WTC11 (cell line): ENCODE measurements at regions of chr6 and their contacts with region 1.

Region 1: GRCh38 chr6:121479496-121480402 is 44.3 kb downstream of the GJA1 start:
- DNase-seq: no peak
- ATAC-seq: peak; percentile 58
- H3K4me3 Mint-ChIP-seq: no peak overlapping the region
- H3K27ac Mint-ChIP-seq: 0 out of 2 replicates have a peak overlapping the region, but pooled peaks have one; percentile 51
- H3K4me1 Mint-ChIP-seq: peaks cover 16% of the 10 kb centered on the region
- H3K27me3 Mint-ChIP-seq: no peaks in the 10 kb centered on the region
- CTCF ChIP-seq: no peak

Region 2: DNA sequence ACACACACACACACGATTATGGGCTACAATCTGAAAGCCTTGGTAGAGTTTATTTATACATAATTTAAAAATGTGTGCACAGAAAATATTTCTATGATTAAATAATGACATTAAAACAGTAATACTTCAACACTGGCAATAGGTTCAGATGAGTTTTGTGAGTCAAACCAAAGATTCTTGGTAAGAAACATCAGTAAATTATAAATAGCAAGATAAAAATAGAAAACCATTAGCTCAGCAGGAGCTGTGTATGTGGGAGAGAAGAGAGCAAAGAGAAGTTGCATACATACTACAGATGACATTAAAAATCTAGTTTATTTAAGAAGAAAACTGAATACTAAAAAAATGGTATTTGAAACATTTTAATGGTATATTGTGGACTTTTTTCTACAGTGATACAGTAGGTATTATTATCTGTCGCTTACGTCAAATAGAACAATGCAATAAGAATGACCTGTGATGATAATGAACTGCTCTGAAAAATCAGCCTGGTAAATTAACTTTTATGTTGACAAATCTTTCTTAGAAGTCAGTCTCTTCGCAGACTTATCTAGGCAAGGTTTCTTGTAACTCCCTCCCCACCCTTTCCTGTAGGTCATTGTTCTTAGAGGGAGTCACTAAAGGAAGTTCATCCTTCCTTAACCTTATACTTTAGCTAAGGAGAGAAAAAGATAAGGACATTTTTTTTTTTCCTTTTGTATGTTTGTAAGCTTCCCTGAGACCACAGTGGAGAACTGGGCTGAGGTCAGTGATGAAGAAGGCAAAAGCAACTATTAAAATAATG is 105.0 kb after region 1 on chr6:
- CTCF ChIA-PET with region 1: no interaction called
- POLR2A ChIA-PET with region 1: interaction called, 12 read pairs
- DNase-seq: no peak
- ATAC-seq: no peak
- H3K4me3 Mint-ChIP-seq: no peak overlapping the region
- H3K27ac Mint-ChIP-seq: no peak overlapping the region
- H3K4me1 Mint-ChIP-seq: peaks cover 5% of the 10 kb centered on the region; the same call in 1 of the 2 replicates
- H3K27me3 Mint-ChIP-seq: no peaks in the 10 kb centered on the region
- CTCF ChIP-seq: no peak